PC-3 (cell line): ENCODE measurements at regions of chr10 and their contacts with region 1.

Region 1: GRCh38 chr10:75612904-75613684 is 181.7 kb downstream of the LRMDA start:
- DNase-seq: no peak
- ATAC-seq: no peak
- H3K4me3 ChIP-seq: no peak overlapping the region
- H3K27ac ChIP-seq: no peak overlapping the region
- H3K4me1 ChIP-seq: no peaks in the 10 kb centered on the region
- H3K27me3 ChIP-seq: peaks cover 26% of the 10 kb centered on the region
- CTCF ChIP-seq: no peak

Region 2: DNA sequence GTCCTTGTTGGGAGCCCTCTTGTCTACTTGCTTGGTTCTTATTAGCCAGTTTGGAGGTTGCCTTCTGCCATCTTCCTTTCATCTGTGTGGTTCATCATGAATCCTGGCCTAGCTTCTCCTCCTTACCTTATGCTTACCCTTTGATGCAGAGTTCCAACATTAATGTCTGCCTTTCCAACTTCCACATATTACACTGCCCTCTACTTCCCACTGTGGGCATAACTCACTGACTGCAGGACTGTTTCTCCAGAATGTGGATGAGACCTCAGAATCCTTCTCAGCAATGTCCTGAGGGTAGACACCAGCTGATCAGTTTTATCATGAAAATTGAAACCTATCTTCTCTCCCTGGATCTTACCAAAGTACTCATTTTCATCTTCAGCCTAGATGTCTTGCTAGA is 309.3 kb after region 1 on chr10:
- CTCF ChIA-PET with region 1: no interaction called
- POLR2A ChIA-PET with region 1: no interaction called
- intact Hi-C with region 1: no loop called
- DNase-seq: peak; percentile 71
- ATAC-seq: peak; percentile 61
- H3K4me3 ChIP-seq: no peak overlapping the region
- H3K27ac ChIP-seq: no peak overlapping the region
- H3K4me1 ChIP-seq: no peaks in the 10 kb centered on the region
- H3K27me3 ChIP-seq: peaks cover 100% of the 10 kb centered on the region
- CTCF ChIP-seq: no peak

Region 3: GRCh38 chr10:75994357-75995040 is 381.4 kb after region 1 on chr10:
- CTCF ChIA-PET with region 1: no interaction called
- POLR2A ChIA-PET with region 1: interaction called, 10 read pairs
- intact Hi-C with region 1: no loop called
- DNase-seq: no peak
- ATAC-seq: no peak
- H3K4me3 ChIP-seq: no peak overlapping the region
- H3K27ac ChIP-seq: no peak overlapping the region
- H3K4me1 ChIP-seq: no peaks in the 10 kb centered on the region
- H3K27me3 ChIP-seq: peaks cover 74% of the 10 kb centered on the region
- CTCF ChIP-seq: no peak